ENCODE measurements at regions of chr1 and their contacts with region 1.

Region 1: GRCh38 chr1:209747580-209748262 is 8.1 kb upstream of the TRAF3IP3 start:
- DNase-seq: peak; percentile 89
- ATAC-seq: peak; percentile 84
- H3K4me3 Mint-ChIP-seq: peak overlapping the region; percentile 66
- H3K27ac Mint-ChIP-seq: peak overlapping the region; percentile 89
- H3K4me1 Mint-ChIP-seq: peaks cover 60% of the 10 kb centered on the region
- H3K27me3 Mint-ChIP-seq: no peaks in the 10 kb centered on the region

Region 2: GRCh38 chr1:209585672-209586071 is 162.0 kb before region 1 on chr1:
- CTCF ChIA-PET with region 1: interaction called, 13 read pairs
- POLR2A ChIA-PET with region 1: no interaction called
- DNase-seq: no peak
- ATAC-seq: peak; percentile 64
- H3K4me3 Mint-ChIP-seq: no peak overlapping the region
- H3K27ac Mint-ChIP-seq: no peak overlapping the region
- H3K4me1 Mint-ChIP-seq: no peaks in the 10 kb centered on the region
- H3K27me3 Mint-ChIP-seq: peaks cover 19% of the 10 kb centered on the region

Region 3: DNA sequence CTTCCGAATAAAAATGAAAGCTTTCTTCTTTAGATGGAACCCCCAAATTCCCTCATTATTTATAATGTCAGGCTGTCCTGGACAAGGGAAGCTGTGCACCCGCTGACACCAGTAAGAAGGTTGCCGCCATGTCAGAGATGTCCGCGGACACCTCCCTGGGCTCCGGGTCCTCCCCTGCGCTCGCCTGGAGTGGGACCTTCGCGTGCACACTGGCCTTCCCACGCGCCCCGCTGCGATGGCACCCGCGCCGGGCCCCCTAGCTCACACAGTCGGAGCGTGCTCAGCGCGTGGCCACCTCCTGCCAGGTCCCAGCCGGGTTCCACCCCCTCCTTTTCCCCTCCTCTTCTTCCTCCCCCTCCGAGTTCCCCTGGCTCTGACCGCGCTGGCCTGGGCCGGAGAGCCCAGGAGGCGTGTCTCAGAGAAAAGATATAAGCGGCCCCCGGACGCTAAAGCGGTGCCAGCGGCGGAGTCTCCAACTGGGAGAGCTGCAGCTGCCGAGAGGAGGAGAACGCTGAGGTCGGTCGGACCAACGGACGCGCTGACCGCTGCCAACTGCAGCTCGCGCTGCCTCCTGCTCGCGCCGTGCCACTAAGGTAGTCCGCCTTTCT is 72.7 kb before region 1 on chr1 and contains the start of gene G0S2:
- CTCF ChIA-PET with region 1: interaction called, 10 read pairs
- POLR2A ChIA-PET with region 1: no interaction called
- DNase-seq: peak; percentile 42
- ATAC-seq: peak; percentile 58
- H3K4me3 Mint-ChIP-seq: peak within 1 kb of the TSS; percentile 57
- H3K27ac Mint-ChIP-seq: no peak within 1 kb of the TSS
- H3K4me1 Mint-ChIP-seq: peaks cover 54% of the 10 kb centered on the region
- H3K27me3 Mint-ChIP-seq: peaks cover 42% of the 10 kb centered on the region
- total RNA-seq, gene G0S2: not detected

Region 4: DNA sequence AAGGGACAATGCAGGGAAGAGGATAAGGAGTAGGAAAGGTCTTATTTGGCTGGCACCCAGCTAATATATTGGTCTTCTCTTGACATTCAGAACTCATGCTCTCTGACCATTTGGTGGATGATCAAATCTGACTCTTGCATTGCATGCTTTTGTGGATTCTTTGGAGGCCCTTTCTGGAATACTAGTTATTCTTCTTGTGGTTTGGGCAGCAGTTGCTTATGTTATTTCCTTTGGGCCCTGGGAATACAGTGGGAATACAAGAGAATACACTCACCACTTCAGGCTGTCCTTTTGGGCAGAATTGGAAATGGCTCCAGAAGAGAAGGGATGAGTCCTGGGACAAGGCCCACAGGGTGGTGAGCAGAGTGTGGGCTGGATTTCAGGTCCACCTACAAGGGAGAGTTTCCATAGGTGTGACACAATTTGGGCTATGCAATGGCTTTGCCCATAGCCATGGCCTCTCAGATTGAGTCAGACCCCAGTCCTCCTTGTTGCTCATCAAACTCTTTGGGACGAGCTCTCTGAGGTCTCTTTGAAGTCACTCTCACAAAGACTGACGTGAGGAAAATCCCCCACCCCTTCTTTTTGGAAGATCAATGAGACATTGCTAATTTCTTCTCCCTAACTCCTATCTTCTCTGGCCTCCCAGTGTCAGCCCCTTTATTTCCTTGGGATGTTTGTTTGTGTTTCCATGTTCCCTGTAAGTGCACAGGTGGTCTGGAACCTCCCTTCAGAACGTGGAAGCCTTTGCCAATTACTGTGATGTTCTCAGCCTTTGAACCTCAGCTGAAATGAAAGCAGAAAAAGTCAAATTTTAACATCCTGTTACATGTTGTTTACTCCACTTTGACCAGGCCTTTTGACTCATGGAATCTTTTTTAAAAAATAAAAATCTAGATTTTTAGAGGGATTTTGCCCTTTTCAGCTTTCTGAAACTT is 23.7 kb before region 1 on chr1:
- CTCF ChIA-PET with region 1: interaction called, 25 read pairs
- POLR2A ChIA-PET with region 1: no interaction called
- DNase-seq: no peak
- ATAC-seq: peak; percentile 51
- H3K4me3 Mint-ChIP-seq: no peak overlapping the region
- H3K27ac Mint-ChIP-seq: peak overlapping the region; percentile 86
- H3K4me1 Mint-ChIP-seq: peaks cover 14% of the 10 kb centered on the region
- H3K27me3 Mint-ChIP-seq: no peaks in the 10 kb centered on the region

Region 5: DNA sequence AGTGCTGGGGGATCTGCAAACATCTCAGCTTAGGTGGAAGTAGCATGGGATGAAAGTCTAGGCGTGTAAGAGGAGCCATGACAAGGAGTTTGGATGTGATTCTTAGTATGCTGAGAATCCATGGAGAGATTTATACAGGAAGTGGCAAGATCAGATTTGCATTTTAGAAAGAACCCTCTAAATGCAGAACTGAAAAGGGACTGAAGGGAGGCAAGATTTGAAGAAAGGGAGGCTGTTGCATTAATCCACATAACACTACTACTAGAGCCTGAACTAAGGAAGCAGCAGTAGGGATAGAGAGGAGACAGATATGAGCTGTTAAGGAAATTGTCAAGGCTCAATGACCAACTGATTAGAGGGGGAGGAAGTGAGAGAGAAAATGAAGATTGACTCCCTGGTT is 26.9 kb after region 1 on chr1:
- CTCF ChIA-PET with region 1: interaction called, 336 read pairs
- POLR2A ChIA-PET with region 1: interaction called, 241 read pairs
- DNase-seq: no peak
- ATAC-seq: no peak
- H3K4me3 Mint-ChIP-seq: no peak overlapping the region
- H3K27ac Mint-ChIP-seq: peak overlapping the region; percentile 61
- H3K4me1 Mint-ChIP-seq: peaks cover 3% of the 10 kb centered on the region
- H3K27me3 Mint-ChIP-seq: no peaks in the 10 kb centered on the region

Region 6: GRCh38 chr1:209808059-209808581 is 60.4 kb after region 1 on chr1:
- CTCF ChIA-PET with region 1: no interaction called
- POLR2A ChIA-PET with region 1: no interaction called
- DNase-seq: no peak
- ATAC-seq: no peak
- H3K4me3 Mint-ChIP-seq: no peak overlapping the region
- H3K27ac Mint-ChIP-seq: no peak overlapping the region
- H3K4me1 Mint-ChIP-seq: peaks cover 11% of the 10 kb centered on the region
- H3K27me3 Mint-ChIP-seq: peaks cover 11% of the 10 kb centered on the region

Region 7: GRCh38 chr1:209850342-209850979 is 102.7 kb after region 1 on chr1:
- CTCF ChIA-PET with region 1: no interaction called
- POLR2A ChIA-PET with region 1: no interaction called
- DNase-seq: peak; percentile 27
- ATAC-seq: peak; percentile 39
- H3K4me3 Mint-ChIP-seq: no peak overlapping the region
- H3K27ac Mint-ChIP-seq: no peak overlapping the region
- H3K4me1 Mint-ChIP-seq: peaks cover 4% of the 10 kb centered on the region
- H3K27me3 Mint-ChIP-seq: no peaks in the 10 kb centered on the region

Region 8: GRCh38 chr1:209945377-209945776 is 197.7 kb after region 1 on chr1:
- CTCF ChIA-PET with region 1: no interaction called
- POLR2A ChIA-PET with region 1: no interaction called
- DNase-seq: no peak
- ATAC-seq: no peak
- H3K4me3 Mint-ChIP-seq: no peak overlapping the region
- H3K27ac Mint-ChIP-seq: no peak overlapping the region
- H3K4me1 Mint-ChIP-seq: no peaks in the 10 kb centered on the region
- H3K27me3 Mint-ChIP-seq: peaks cover 9% of the 10 kb centered on the region

Region 9: GRCh38 chr1:210021145-210021860 is 273.6 kb after region 1 on chr1:
- CTCF ChIA-PET with region 1: no interaction called
- POLR2A ChIA-PET with region 1: no interaction called
- DNase-seq: no peak
- ATAC-seq: no peak
- H3K4me3 Mint-ChIP-seq: no peak overlapping the region
- H3K27ac Mint-ChIP-seq: no peak overlapping the region
- H3K4me1 Mint-ChIP-seq: no peaks in the 10 kb centered on the region
- H3K27me3 Mint-ChIP-seq: peaks cover under 1% of the 10 kb centered on the region

Measured in activated CD8-positive, alpha-beta T cell treated with anti-CD3 and anti-CD28 coated beads, Interleukin-2, amount 10 ng/mL, durations not matched to agents 7 days and 5 days (primary cell).